ENCODE measurements at regions of chr2 and their contacts with region 1.

Region 1: GRCh38 chr2:237020090-237020489 is 65.6 kb upstream of the COPS8 start:
- DNase-seq: no peak
- ATAC-seq: no peak
- H3K4me3 ChIP-seq: no peak overlapping the region
- H3K27ac ChIP-seq: no peak overlapping the region
- H3K4me1 ChIP-seq: no peaks in the 10 kb centered on the region
- H3K27me3 ChIP-seq: no peaks in the 10 kb centered on the region
- CTCF ChIP-seq: no peak

Region 2: DNA sequence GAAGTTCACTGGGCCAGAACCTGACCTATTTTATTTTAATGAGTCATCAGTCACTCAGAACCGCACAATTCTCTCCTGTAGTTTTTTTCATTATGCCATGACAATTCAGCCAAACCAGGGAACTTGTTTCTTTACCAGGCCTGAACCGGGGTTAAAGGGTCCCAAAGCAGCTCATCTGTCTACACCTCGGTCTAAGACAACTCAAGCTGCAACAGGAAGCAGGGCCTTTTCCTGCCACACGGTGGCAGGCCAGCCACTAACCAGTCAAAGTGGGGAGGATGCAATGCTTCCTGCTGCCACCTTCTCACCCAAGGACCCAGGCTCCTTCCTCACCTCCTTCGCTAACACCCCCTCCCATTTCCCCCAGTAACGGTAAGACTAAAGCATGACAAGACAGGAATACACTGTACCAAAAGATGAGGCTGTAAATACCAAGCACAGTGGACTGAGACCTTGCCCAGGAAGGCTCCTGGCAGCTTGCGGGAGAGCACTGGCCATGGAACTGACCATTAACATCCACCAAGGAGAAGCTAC is 507.1 kb before region 1 on chr2:
- intact Hi-C with region 1: loop called in 1 of 3 experiments (anchors 5 kb)
- DNase-seq: peak; percentile 46 to 75 (median 59)
- ATAC-seq: peak; percentile 93 to 98 (median 96)
- H3K4me3 ChIP-seq: no peak overlapping the region
- H3K27ac ChIP-seq: no peak overlapping the region
- H3K4me1 ChIP-seq: peaks cover 0 to 5% (median under 1%) of the 10 kb centered on the region in 3 donors
- H3K27me3 ChIP-seq: no peaks in the 10 kb centered on the region
- CTCF ChIP-seq: peak; percentile 67 to 90 (median 73)

Measured in pancreas (tissue), 10 donors.